ENCODE measurements at regions of chr3 and their contacts with region 1.

Region 1: DNA sequence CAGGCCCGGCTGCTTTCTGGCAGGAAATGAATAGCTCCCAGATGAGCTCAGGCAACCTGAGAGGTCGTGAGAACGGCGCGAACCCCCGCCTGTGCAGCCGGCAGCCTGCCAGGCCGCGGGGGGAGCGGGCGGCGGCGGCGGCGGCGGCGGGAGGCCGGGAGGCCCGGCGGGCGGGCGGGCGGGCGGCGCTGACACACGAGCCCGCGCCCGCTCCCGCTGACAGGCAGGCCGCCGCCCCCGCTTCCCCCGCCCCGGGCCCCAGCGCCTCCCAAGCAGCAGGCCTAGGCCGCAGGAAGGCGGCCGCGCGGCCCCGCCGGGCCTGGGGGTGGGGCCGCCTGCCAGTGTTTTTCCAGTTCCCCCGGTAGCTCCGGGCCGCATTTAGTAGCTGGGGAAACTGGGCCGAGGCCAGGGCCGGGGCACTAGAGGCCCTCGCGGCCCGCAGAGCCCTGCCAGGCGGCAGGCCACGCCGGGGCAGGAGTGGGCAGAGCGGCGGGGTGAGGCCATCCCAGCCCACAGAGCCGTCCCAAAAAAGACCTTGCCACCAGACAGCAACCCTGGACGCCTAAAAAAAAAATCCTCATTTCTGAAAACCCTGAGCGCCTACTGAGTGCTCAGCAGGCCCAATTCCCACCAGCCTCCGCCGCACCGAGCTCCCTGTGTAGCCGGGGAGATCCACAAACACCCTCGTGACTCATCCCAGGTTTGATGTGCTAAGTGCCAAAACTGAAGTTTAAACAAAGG is 5.6 kb downstream of the HES1 start:
- DNase-seq: peak; percentile 93
- H3K4me3 ChIP-seq: no peak overlapping the region
- H3K27ac ChIP-seq: peak overlapping the region; percentile 99
- H3K4me1 ChIP-seq: peaks cover 40% of the 10 kb centered on the region
- H3K27me3 ChIP-seq: no peaks in the 10 kb centered on the region
- CTCF ChIP-seq: peak in 1 of 2 donors; percentile 14
- POLR2A ChIP-seq: no peak

Region 2: GRCh38 chr3:194189243-194189791 is 47.7 kb after region 1 on chr3:
- CTCF ChIA-PET with region 1: no interaction called
- POLR2A ChIA-PET with region 1: no interaction called
- dilution Hi-C with region 1: no loop called
- intact Hi-C with region 1: loop called (anchors 1 kb)
- DNase-seq: peak; percentile 66
- H3K4me3 ChIP-seq: no peak overlapping the region
- H3K27ac ChIP-seq: no peak overlapping the region
- H3K4me1 ChIP-seq: peaks cover 8% of the 10 kb centered on the region
- H3K27me3 ChIP-seq: no peaks in the 10 kb centered on the region
- CTCF ChIP-seq: no peak
- POLR2A ChIP-seq: no peak

Region 3: DNA sequence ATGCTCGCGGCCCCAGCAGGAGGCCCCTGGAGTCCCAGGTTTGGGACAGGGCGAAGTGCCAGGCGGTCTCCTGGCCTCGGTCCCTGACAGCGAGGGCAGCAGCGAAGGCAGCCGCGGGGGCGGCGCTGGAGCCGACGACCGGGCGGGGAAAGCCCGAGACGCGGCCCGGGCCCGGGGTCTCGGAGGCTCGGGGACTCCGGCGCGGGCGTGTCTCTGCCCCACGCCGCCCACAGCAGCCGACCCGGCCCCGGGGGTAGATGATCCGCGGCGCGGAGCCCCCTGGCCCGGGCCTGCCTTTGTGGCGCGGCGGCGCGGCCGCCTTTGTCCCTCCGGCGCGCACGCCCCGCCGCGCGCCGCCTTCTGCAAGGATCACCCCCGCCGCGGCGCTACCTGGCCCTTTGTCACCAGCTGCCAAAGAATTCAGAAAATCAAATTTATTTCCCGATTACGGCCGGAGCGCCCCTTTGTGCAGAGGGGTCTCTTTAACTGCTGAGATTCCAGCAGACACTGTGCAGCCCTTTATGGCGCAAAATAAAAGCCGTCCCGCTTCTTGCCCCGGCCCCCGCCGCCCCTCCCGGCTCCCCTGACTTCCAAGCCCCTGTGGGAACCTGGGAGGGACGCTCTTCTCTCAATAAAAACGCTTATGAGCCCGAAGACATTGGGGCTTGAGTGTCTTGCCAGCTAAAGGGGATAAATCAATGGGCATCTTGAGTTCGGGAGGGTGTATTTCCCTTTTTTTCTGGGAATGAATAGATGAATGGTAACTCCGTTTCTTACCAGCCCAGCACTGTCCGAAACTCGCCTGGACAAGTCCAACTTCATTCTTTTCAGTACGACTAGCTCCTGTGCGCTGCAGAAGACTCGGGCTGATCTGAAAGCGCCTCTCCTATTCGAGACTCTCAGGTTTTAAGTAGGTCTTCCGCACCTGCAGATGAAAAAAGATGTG is 62.7 kb after region 1 on chr3:
- CTCF ChIA-PET with region 1: no interaction called
- POLR2A ChIA-PET with region 1: interaction called, 4 read pairs
- dilution Hi-C with region 1: no loop called
- intact Hi-C with region 1: loop called (anchors 1 kb)
- DNase-seq: no peak
- H3K4me3 ChIP-seq: peak overlapping the region; percentile 22 to 31 (median 28)
- H3K27ac ChIP-seq: no peak overlapping the region
- H3K4me1 ChIP-seq: peaks cover 17% of the 10 kb centered on the region
- H3K27me3 ChIP-seq: no peaks in the 10 kb centered on the region
- CTCF ChIP-seq: no peak
- POLR2A ChIP-seq: no peak

Region 4: GRCh38 chr3:194255252-194256039 is 113.9 kb after region 1 on chr3:
- CTCF ChIA-PET with region 1: interaction called, 4 read pairs
- POLR2A ChIA-PET with region 1: interaction called, 4 read pairs
- dilution Hi-C with region 1: no loop called
- intact Hi-C with region 1: loop called (anchors 1 kb)
- DNase-seq: peak; percentile 94
- H3K4me3 ChIP-seq: no peak overlapping the region
- H3K27ac ChIP-seq: peak overlapping the region; percentile 85
- H3K4me1 ChIP-seq: peaks cover 14% of the 10 kb centered on the region
- H3K27me3 ChIP-seq: no peaks in the 10 kb centered on the region
- CTCF ChIP-seq: peak in 1 of 2 donors; percentile 6
- POLR2A ChIP-seq: no peak

Region 5: DNA sequence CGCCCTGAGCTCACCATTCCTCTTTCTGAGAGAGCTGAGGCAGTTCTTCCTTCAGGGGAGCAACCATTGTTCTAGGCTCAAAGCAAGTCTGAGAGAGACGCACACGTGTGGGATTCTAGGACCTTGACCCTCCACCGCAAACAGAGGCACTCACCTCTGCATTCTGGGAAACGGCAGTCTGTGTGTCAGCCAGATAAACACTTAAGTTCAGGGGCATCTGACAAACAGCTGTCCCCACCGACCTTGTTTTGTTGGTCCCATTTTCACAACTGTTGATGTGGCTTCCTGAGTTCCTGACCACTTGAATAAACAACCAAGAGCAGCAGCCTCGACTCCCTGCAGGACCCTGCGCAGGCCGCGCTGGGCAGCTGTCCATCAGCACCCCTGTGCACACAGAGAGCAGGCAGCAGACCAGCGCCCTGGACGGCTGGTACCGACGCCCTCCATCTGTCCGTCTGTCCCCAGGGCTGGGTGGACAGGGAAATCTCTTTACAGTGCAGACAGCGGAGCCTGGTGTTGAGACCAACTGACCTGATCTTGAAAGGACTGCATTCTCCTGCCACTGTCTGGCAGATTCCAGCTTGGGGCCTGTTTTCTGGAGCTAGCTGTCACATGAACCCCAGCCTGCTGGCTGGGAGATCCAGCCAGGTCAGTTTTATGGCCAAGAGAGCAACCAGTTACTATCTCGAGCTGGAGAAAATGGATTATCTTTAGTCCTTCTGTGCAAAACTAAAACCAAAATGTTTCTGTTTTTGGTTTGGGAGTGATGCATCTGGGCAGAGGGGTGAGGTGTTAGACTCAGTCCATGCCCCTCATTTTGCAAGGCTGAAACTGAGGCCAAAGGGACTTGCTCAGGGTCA is 608.3 kb after region 1 on chr3:
- CTCF ChIA-PET with region 1: no interaction called
- POLR2A ChIA-PET with region 1: no interaction called
- dilution Hi-C with region 1: no loop called
- intact Hi-C with region 1: no loop called
- DNase-seq: peak; percentile 76
- H3K4me3 ChIP-seq: no peak overlapping the region
- H3K27ac ChIP-seq: no peak overlapping the region
- H3K4me1 ChIP-seq: no peaks in the 10 kb centered on the region
- H3K27me3 ChIP-seq: no peaks in the 10 kb centered on the region
- CTCF ChIP-seq: no peak
- POLR2A ChIP-seq: no peak